CD4-positive, alpha-beta memory T cell (primary cell): ENCODE measurements at regions of chr16 and their contacts with region 1.

Region 1: DNA sequence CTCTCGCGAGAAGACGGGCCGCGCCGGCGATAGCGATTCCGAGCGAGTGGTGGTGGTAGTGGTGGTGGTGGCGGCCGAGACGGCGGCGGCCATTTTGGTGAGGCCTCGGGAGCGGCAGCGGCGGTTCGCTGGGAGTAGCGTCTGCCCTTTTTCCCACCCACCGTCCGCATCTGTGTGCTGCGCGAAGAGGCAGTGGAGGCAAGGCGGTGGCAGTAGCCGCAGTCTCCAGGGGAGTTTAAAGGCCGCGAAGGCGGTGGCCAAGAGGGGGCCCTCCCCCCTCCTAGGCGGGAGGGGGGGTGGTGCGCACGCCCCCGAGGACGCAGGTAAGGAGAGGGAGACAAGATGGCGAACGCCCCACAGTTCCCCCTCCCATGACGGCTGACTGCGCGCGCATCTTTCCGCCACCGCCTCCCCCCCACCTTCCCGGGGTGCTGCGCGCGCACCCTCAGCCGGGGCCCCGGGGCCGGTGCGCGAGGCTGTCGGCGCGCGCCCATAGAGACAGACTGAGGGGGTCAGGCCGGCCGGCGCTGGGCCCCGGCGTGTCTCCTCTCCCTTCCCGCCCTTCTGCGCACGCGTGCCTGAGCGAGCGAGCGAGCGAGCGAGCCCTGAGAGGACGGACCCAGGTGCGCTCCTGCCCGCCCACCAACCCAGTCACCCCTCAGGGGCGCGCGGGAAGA is 694 bp upstream of the SRCAP start:
- DNase-seq: peak; percentile 99 to 100 (median 100)
- H3K4me3 ChIP-seq: peak overlapping the region; percentile 61 to 71
- H3K4me3 Mint-ChIP-seq: peak overlapping the region; percentile 95 to 99 (median 96)
- H3K27ac ChIP-seq: peak overlapping the region; percentile 100
- H3K27ac Mint-ChIP-seq: peak overlapping the region; percentile 100
- H3K4me1 ChIP-seq: peaks cover 36% of the 10 kb centered on the region
- H3K4me1 Mint-ChIP-seq: peaks cover 22 to 44% (median 32%) of the 10 kb centered on the region in 4 donors
- H3K27me3 ChIP-seq: no peaks in the 10 kb centered on the region
- H3K27me3 Mint-ChIP-seq: peaks cover 0 to 3% of the 10 kb centered on the region in 2 donors

Region 2: GRCh38 chr16:30557957-30558788 is 140.1 kb before region 1 on chr16 and contains the start of gene ZNF764:
- CTCF ChIA-PET with region 1: interaction called, 7 read pairs
- POLR2A ChIA-PET with region 1: interaction called, 4 read pairs
- intact Hi-C with region 1: loop called (anchors 1 kb)
- DNase-seq: peak; percentile 94 to 98 (median 96)
- H3K4me3 ChIP-seq: peak within 1 kb of the TSS; percentile 58 to 75
- H3K4me3 Mint-ChIP-seq: peak within 1 kb of the TSS; percentile 88 to 94 (median 92)
- H3K27ac ChIP-seq: peak within 1 kb of the TSS; percentile 95
- H3K27ac Mint-ChIP-seq: peak within 1 kb of the TSS; percentile 93 to 97 (median 95)
- H3K4me1 ChIP-seq: peaks cover 54% of the 10 kb centered on the region
- H3K4me1 Mint-ChIP-seq: peaks cover 19 to 55% (median 37%) of the 10 kb centered on the region in 4 donors
- H3K27me3 ChIP-seq: no peaks in the 10 kb centered on the region
- H3K27me3 Mint-ChIP-seq: no peaks in the 10 kb centered on the region
- total RNA-seq, gene ZNF764: 28.9 to 29.3 TPM

Region 3: GRCh38 chr16:30628627-30629540 is 69.4 kb before region 1 on chr16:
- CTCF ChIA-PET with region 1: interaction called, 24 read pairs
- POLR2A ChIA-PET with region 1: interaction called, 5 read pairs
- intact Hi-C with region 1: loop called (anchors 2 kb)
- DNase-seq: peak; percentile 72 to 83 (median 80)
- H3K4me3 ChIP-seq: peak overlapping the region in 1 of 2 donors; percentile 48
- H3K4me3 Mint-ChIP-seq: peak overlapping the region; percentile 67 to 86 (median 78)
- H3K27ac ChIP-seq: no peak overlapping the region
- H3K27ac Mint-ChIP-seq: peak overlapping the region; percentile 38 to 95 (median 87)
- H3K4me1 ChIP-seq: peaks cover 9% of the 10 kb centered on the region
- H3K4me1 Mint-ChIP-seq: peaks cover 4 to 9% (median 7%) of the 10 kb centered on the region in 4 donors
- H3K27me3 ChIP-seq: no peaks in the 10 kb centered on the region
- H3K27me3 Mint-ChIP-seq: peaks cover 0 to under 1% of the 10 kb centered on the region in 2 donors

Region 4: GRCh38 chr16:30728899-30729672 is 30.8 kb after region 1 on chr16:
- CTCF ChIA-PET with region 1: no interaction called
- POLR2A ChIA-PET with region 1: no interaction called
- intact Hi-C with region 1: no loop called
- DNase-seq: no peak
- H3K4me3 ChIP-seq: no peak overlapping the region
- H3K4me3 Mint-ChIP-seq: no peak overlapping the region
- H3K27ac ChIP-seq: no peak overlapping the region
- H3K27ac Mint-ChIP-seq: peak overlapping the region in 1 of 7 donors; percentile 73
- H3K4me1 ChIP-seq: no peaks in the 10 kb centered on the region
- H3K4me1 Mint-ChIP-seq: peaks cover 0 to 9% (median 3%) of the 10 kb centered on the region in 4 donors
- H3K27me3 ChIP-seq: no peaks in the 10 kb centered on the region
- H3K27me3 Mint-ChIP-seq: no peaks in the 10 kb centered on the region

Region 5: GRCh38 chr16:30747799-30748634 is 49.7 kb after region 1 on chr16 and contains the start of gene PHKG2:
- CTCF ChIA-PET with region 1: interaction called, 3 read pairs
- POLR2A ChIA-PET with region 1: interaction called, 8 read pairs
- intact Hi-C with region 1: loop called (anchors 1 kb)
- DNase-seq: peak; percentile 94 to 96 (median 95)
- H3K4me3 ChIP-seq: peak within 1 kb of the TSS; percentile 65 to 71
- H3K4me3 Mint-ChIP-seq: peak within 1 kb of the TSS; percentile 89 to 97 (median 91)
- H3K27ac ChIP-seq: peak within 1 kb of the TSS; percentile 60
- H3K27ac Mint-ChIP-seq: peak within 1 kb of the TSS; percentile 73 to 94 (median 89)
- H3K4me1 ChIP-seq: peaks cover 7% of the 10 kb centered on the region
- H3K4me1 Mint-ChIP-seq: peaks cover 14 to 33% (median 20%) of the 10 kb centered on the region in 4 donors
- H3K27me3 ChIP-seq: no peaks in the 10 kb centered on the region
- H3K27me3 Mint-ChIP-seq: no peaks in the 10 kb centered on the region
- total RNA-seq, gene PHKG2: 54.1 to 54.9 TPM

Region 6: DNA sequence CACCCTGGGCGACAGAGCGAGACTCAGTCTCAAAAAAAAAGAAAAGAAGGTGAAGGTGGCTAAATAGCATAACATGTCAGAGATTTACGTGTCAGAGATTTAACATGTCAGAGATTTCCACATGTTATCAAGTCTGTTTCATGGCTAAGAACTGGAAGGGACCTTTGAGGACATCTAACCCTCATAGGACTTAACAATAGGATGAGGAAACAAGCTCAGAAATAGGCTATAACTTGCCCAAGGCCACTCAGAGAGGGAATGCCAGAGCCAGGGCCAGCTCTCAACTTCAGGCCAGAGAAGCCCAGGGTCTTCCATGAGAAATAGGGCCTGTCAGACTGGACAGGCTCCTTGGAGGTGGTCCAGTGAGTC is 115.5 kb after region 1 on chr16:
- CTCF ChIA-PET with region 1: interaction called, 6 read pairs
- POLR2A ChIA-PET with region 1: interaction called, 3 read pairs
- intact Hi-C with region 1: loop called (anchors 1 kb)
- DNase-seq: no peak
- H3K4me3 ChIP-seq: peak overlapping the region; percentile 61 to 64
- H3K4me3 Mint-ChIP-seq: peak overlapping the region; percentile 88 to 93 (median 89)
- H3K27ac ChIP-seq: peak overlapping the region; percentile 57
- H3K27ac Mint-ChIP-seq: peak overlapping the region; percentile 81 to 91 (median 90)
- H3K4me1 ChIP-seq: peaks cover 13% of the 10 kb centered on the region
- H3K4me1 Mint-ChIP-seq: peaks cover 8 to 17% (median 12%) of the 10 kb centered on the region in 4 donors
- H3K27me3 ChIP-seq: no peaks in the 10 kb centered on the region
- H3K27me3 Mint-ChIP-seq: no peaks in the 10 kb centered on the region

Region 7: DNA sequence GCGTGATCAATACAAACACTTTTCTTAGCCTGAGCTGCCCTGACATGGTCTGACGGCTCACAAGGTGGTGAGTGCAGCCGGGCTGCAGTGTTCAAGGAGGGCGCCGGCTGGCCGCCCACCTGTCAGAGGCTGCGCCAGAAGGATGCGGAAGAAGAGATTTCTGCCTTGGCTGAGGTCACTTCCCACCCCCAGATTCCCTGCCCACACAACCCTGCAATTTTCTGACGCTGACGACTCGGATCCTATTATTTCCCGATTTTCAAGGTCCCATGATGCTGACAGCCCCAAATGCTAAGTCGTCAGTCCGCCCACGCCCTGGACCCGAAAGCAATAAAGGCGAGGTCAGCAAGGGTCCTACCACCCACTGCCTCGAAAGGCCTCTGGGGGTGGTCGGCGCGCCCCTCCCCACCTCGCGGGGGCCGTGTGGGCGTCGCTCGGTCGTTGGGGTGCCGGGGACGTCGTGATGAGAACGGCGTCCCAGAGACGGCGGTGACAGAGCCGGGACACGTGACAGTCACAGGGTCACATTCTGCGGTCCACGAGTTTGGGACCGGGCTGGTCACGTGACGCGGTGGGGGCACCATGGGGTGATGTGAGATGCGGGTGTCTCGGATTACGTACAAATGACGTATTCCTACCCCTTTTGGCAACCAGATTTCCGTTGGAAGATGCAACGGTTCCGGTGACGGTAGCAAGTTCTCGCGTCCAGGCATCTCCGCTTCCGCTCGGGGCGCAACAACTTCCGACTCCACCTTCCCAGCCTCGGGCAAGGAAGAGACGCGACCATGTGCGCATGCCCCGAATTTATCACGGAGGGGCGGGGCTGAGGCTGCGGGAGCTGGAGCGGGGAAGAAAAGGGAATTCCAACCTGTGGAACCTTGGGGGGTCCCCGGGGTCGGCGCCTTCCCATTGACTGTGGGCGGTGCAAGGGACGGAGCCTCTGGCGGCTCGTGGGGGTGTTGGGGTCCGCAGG is 334.7 kb after region 1 on chr16 and contains the start of gene STX4:
- CTCF ChIA-PET with region 1: no interaction called
- POLR2A ChIA-PET with region 1: no interaction called
- intact Hi-C with region 1: loop called (anchors 1 kb)
- DNase-seq: peak; percentile 95 to 100 (median 98)
- H3K4me3 ChIP-seq: peak within 1 kb of the TSS; percentile 83 to 97
- H3K4me3 Mint-ChIP-seq: peak within 1 kb of the TSS; percentile 91 to 98 (median 95)
- H3K27ac ChIP-seq: peak within 1 kb of the TSS; percentile 86
- H3K27ac Mint-ChIP-seq: peak within 1 kb of the TSS; percentile 93 to 98 (median 98)
- H3K4me1 ChIP-seq: peaks cover 24% of the 10 kb centered on the region
- H3K4me1 Mint-ChIP-seq: peaks cover 6 to 38% (median 22%) of the 10 kb centered on the region in 4 donors
- H3K27me3 ChIP-seq: no peaks in the 10 kb centered on the region
- H3K27me3 Mint-ChIP-seq: no peaks in the 10 kb centered on the region
- total RNA-seq, gene STX4: 106 to 111 TPM